Right ventricle myocardium inferior (tissue), 1 donor: ENCODE measurements at regions of chr16 and their contacts with region 1.

Region 1: GRCh38 chr16:3457434-3458252 is 14.2 kb downstream of the NAA60 start:
- DNase-seq: peak; percentile 96
- ATAC-seq: peak; percentile 92

Region 2: GRCh38 chr16:3134564-3135417 is 322.9 kb before region 1 on chr16 and contains the start of gene ZNF213:
- intact Hi-C with region 1: no loop called
- DNase-seq: peak; percentile 96
- ATAC-seq: peak; percentile 96
- total RNA-seq, gene ZNF213: 6.2 TPM

Region 3: DNA sequence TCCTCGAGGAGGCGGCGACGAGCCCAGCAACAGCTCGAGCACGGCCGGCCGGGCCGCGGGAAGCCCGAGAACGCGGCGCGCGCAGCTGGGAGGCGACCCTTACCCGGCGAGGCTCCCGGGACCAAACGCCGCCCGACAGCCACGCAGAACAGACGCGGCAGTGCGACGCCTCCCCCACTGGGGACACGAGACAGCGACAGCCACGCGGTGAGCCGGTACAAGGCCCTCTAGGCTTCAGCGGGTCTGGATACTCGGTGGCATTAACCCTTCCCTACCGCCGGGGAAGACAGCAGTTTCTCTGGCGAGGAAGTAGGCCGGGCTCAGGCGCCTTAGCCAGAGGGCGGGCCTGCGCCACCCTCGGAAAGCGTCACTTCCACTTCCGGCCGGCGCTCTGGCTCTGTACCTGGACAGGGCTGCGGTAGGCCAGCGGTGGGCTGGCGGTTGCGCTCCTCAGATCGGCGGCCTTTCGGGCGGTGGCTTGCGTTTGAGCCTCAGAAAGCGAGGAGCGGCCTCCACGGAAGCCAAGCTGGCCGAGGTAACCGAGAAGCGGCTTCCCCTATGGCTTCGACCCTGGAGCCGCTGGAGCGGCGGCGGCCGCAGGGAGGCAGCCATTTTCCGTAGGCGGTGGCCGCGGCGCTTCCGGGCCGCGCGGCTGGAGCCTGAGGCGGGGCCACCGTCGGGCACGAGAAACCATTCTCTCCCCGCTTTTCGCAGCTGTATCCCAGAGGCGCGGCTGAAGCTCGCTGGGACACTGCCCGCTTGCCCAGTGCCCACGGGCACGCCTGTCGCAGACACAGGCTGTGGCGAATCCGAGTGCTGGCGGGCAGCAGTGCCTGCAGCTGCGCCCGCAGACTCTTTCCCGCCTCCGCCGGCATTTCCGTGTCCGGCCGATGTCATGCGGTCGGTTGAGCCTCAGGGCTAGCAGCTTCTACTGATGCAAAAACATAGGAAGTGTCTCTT is 152.3 kb before region 1 on chr16 and contains the starts of genes TIGD7 and ZNF75A:
- intact Hi-C with region 1: loop called (anchors 5 kb)
- DNase-seq: peak; percentile 96
- ATAC-seq: peak; percentile 99
- total RNA-seq, gene TIGD7: 8.4 TPM
- total RNA-seq, gene ZNF75A: 19.0 TPM